ENCODE measurements at regions of chr3 and their contacts with region 1.

Region 1: DNA sequence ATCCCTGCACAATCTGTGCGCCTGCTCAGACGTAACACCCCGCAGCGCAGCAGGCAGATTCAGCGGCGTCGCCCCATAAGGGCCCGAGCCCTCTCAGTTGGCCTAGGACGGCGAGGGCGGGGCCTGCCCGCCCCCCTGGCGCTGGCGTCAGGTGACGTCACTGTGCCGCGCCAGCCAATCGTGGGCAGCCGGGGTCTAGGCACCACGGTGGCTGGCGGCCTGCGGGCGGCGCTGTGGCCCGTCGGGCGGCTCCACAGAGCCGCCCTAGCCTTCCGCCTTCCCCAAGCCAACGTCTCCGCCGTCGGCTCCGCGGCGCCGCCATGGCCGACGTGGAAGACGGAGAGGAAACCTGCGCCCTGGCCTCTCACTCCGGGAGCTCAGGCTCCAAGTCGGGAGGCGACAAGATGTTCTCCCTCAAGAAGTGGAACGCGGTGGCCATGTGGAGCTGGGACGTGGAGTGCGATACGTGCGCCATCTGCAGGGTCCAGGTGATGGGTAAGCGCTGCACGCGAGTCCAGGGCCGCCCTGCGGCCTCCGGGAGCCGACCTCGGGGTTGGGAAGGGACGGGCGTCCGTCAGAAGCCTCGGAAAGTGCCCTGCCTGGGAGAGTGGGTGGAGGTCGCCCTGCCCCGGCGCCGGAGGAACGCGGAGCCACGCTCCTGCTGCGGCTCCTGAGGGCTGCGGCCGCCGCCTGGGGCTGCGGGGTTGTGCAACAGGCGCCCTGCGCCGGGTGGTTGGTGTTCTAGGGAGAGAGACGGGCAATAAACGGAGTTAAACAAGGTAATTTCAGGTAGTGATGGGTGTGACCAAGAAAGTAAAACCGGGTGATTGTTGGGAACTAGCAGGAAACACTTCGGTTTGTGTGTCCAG is at the start of gene RNF7:
- DNase-seq: peak; percentile 99
- H3K4me3 Mint-ChIP-seq: peak within 1 kb of the TSS; percentile 92
- H3K27ac Mint-ChIP-seq: peak within 1 kb of the TSS; percentile 98
- H3K4me1 Mint-ChIP-seq: peaks cover 23% of the 10 kb centered on the region
- H3K27me3 Mint-ChIP-seq: peaks cover 3% of the 10 kb centered on the region
- total RNA-seq, gene RNF7: 67.3 and 72.5 TPM in 2 replicates

Region 2: DNA sequence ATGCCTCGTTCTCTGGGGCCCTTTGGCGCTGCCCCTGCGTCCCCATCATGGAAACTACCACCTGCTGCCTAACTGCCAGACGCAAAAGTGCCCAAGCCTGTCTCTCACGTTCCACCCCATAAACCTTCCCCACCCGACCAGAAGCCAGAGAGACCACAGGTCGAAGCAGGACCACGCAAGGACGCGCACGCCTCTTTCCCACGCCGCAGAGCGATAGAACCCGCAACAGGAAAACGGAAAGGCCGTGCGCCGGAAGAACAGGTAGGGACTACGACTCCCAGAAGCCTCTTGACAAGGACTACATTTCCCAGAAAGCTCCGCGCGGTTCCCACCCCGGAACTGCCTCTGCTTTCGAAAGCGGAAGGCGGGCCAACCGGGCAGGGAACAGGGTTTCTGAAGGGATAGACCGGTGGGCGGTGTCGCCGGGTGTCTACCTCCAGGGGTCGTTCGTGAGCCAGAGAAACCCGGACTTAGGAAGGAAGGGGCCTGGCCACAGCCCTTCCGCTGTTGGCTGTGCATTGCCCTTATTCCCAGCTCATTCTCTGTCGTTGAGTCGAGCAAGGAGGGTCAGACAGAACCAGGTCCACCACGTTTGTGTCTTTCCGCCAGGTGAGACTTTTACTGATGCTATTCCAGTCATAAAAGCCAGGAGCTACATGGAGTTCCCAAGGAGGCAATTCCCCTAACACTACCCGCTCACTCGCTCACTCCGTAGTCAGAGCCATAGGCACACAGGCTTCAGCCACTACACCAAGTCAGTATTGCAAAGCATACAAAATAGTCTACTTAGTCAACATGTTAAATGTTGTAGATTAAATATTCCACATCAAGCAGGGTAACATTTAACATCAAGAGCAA is 426.5 kb before region 1 on chr3:
- intact Hi-C with region 1: loop called (anchors 10 kb)
- DNase-seq: peak; percentile 99
- H3K4me3 Mint-ChIP-seq: peak overlapping the region; percentile 95
- H3K27ac Mint-ChIP-seq: peak overlapping the region; percentile 96
- H3K4me1 Mint-ChIP-seq: peaks cover 55% of the 10 kb centered on the region
- H3K27me3 Mint-ChIP-seq: no peaks in the 10 kb centered on the region

Region 3: GRCh38 chr3:141722081-141722480 is 16.2 kb before region 1 on chr3:
- intact Hi-C with region 1: no loop called
- DNase-seq: no peak
- H3K4me3 Mint-ChIP-seq: no peak overlapping the region
- H3K27ac Mint-ChIP-seq: no peak overlapping the region
- H3K4me1 Mint-ChIP-seq: no peaks in the 10 kb centered on the region
- H3K27me3 Mint-ChIP-seq: peaks cover 14% of the 10 kb centered on the region

Region 4: DNA sequence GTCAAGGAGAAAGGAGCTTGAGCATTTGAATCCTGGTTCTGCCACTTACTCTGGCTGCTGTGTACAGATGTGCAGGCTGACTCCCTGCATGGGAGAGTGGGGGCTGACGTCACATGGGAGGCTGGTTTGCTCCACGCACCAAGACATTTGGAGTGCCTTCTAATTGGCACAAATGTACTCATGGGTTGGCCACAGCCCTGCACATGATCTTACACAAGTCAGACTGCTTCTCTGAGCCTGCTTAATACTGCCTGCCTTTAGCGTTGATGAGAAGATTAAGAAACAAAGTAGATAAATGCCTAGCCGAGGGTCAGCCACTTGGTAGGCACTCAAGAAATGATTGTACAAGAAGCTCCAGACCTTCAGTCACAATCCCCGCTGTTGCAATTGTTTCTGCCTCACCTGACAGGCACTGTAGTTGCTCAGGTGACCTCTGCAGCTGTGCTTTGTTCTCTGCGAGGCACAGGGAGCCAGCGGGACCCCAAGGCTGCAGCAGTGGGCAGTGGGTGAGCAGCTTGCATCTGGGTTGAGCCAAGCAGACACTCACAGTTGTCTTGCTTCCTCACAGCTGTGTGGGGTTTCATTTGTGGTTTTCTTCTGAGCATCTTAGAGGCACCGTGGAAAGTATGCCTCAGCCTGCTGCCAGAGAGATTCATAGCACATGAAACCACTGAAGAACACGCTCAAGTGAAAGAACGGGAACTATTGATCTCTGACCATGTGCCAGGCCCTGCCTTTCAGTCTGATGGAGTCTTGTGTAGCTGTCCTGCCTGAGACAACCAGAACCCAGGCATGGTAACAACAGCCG is 58.0 kb after region 1 on chr3:
- intact Hi-C with region 1: loop called (anchors 1 kb)
- DNase-seq: peak; percentile 92
- H3K4me3 Mint-ChIP-seq: peak overlapping the region; percentile 84
- H3K27ac Mint-ChIP-seq: peak overlapping the region; percentile 100
- H3K4me1 Mint-ChIP-seq: peaks cover 44% of the 10 kb centered on the region
- H3K27me3 Mint-ChIP-seq: no peaks in the 10 kb centered on the region

Region 5: GRCh38 chr3:141998669-141999290 is 260.5 kb after region 1 on chr3:
- intact Hi-C with region 1: loop called (anchors 1 kb)
- DNase-seq: no peak
- H3K4me3 Mint-ChIP-seq: no peak overlapping the region
- H3K27ac Mint-ChIP-seq: no peak overlapping the region
- H3K4me1 Mint-ChIP-seq: no peaks in the 10 kb centered on the region
- H3K27me3 Mint-ChIP-seq: no peaks in the 10 kb centered on the region

Region 6: DNA sequence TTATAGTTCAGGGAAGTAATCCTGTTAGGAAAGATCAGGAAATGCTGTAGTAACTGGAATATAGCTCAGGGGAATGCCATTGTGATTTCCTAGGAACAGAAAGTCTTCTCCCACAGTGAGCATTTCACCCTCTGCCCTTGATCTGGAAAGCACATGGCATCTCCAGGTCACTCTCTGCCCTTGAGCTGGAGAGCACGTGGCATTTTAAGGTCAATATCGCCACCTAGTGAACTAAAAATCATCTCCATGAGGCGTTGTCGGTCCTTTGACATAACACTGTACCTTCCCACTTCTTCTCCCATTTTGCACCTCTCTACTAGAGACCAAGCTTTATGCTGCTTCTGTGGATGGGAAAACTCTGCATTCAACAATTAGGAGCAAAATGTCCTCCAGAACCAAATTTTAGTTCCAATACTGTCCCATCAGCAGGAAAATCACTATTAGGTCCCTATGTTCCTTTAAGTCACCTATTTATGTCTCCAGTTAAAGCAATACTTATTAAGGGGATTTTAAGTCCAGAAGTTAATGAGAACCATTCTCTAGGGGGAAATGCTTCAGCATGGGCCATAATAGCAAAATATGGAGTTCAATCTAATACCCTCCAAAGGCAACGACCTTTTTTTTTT is 541.8 kb after region 1 on chr3:
- intact Hi-C with region 1: loop called (anchors 5 kb)
- DNase-seq: peak; percentile 86
- H3K4me3 Mint-ChIP-seq: no peak overlapping the region
- H3K27ac Mint-ChIP-seq: peak overlapping the region; percentile 31
- H3K4me1 Mint-ChIP-seq: peaks cover 11% of the 10 kb centered on the region
- H3K27me3 Mint-ChIP-seq: no peaks in the 10 kb centered on the region

Measured in activated CD4-positive, alpha-beta T cell treated with anti-CD3 and anti-CD28 coated beads, Interleukin-2, amount 10 ng/mL, durations not matched to agents 24 days and 14 days (primary cell).